B cell (primary cell): ENCODE measurements at regions of chr10 and their contacts with region 1.

Region 1: DNA sequence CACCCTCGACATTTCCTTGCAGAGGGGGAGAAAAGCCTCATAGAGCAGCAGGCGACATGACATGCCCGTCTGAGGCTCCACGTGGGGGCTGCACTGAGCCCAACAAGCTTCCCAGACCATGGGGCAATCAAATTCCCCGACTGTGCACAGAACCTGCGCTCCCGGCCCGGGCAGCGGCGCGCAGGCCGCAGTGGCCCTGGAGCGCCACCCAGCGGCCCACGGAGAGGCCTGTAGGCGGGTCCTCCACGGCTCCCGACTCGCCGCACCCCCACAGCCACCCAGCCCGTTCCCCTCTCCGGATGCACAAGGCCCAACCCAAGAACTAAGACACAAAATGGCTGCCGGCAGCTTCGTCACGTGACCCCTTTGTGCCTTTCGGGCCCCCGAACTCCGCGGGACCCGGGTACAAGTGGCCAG is 816 bp downstream of the EPC1 start:
- DNase-seq: peak; percentile 97
- ATAC-seq: peak; percentile 84
- H3K4me3 ChIP-seq: peak overlapping the region; percentile 82 to 100 (median 98)
- H3K4me3 Mint-ChIP-seq: peak overlapping the region; percentile 97
- H3K27ac ChIP-seq: peak overlapping the region; percentile 99 to 100
- H3K27ac Mint-ChIP-seq: peak overlapping the region; percentile 100
- H3K4me1 ChIP-seq: peaks cover 38 to 51% of the 10 kb centered on the region in 2 donors
- H3K4me1 Mint-ChIP-seq: peaks cover 69% of the 10 kb centered on the region
- H3K27me3 ChIP-seq: no peaks in the 10 kb centered on the region
- H3K27me3 Mint-ChIP-seq: no peaks in the 10 kb centered on the region
- CTCF ChIP-seq: peak; percentile 94

Region 2: GRCh38 chr10:30433730-30434272 is 1912.3 kb before region 1 on chr10 and contains the start of gene MAP3K8:
- CTCF ChIA-PET with region 1: no interaction called
- POLR2A ChIA-PET with region 1: no interaction called
- intact Hi-C with region 1: loop called (anchors 10 kb)
- DNase-seq: peak; percentile 96
- ATAC-seq: peak; percentile 73
- H3K4me3 ChIP-seq: peak within 1 kb of the TSS; percentile 93 to 99 (median 97)
- H3K4me3 Mint-ChIP-seq: peak within 1 kb of the TSS; percentile 98
- H3K27ac ChIP-seq: peak within 1 kb of the TSS; percentile 95 to 99
- H3K27ac Mint-ChIP-seq: peak within 1 kb of the TSS; percentile 97
- H3K4me1 ChIP-seq: peaks cover 56 to 74% of the 10 kb centered on the region in 2 donors
- H3K4me1 Mint-ChIP-seq: peaks cover 71% of the 10 kb centered on the region
- H3K27me3 ChIP-seq: no peaks in the 10 kb centered on the region
- H3K27me3 Mint-ChIP-seq: no peaks in the 10 kb centered on the region
- CTCF ChIP-seq: no peak
- total RNA-seq, gene MAP3K8: 97.0 and 104 TPM in 2 replicates

Region 3: GRCh38 chr10:31578187-31578852 is 767.8 kb before region 1 on chr10:
- CTCF ChIA-PET with region 1: no interaction called
- POLR2A ChIA-PET with region 1: no interaction called
- intact Hi-C with region 1: no loop called
- DNase-seq: no peak
- ATAC-seq: no peak
- H3K4me3 ChIP-seq: no peak overlapping the region
- H3K4me3 Mint-ChIP-seq: no peak overlapping the region
- H3K27ac ChIP-seq: no peak overlapping the region
- H3K27ac Mint-ChIP-seq: no peak overlapping the region
- H3K4me1 ChIP-seq: peaks cover 6% of the 10 kb centered on the region in 2 donors
- H3K4me1 Mint-ChIP-seq: peaks cover 7% of the 10 kb centered on the region
- H3K27me3 ChIP-seq: no peaks in the 10 kb centered on the region
- H3K27me3 Mint-ChIP-seq: peaks cover 5% of the 10 kb centered on the region
- CTCF ChIP-seq: no peak

Region 4: GRCh38 chr10:31799181-31799580 is 547.0 kb before region 1 on chr10:
- CTCF ChIA-PET with region 1: no interaction called
- POLR2A ChIA-PET with region 1: no interaction called
- intact Hi-C with region 1: no loop called
- DNase-seq: no peak
- ATAC-seq: no peak
- H3K4me3 ChIP-seq: no peak overlapping the region
- H3K4me3 Mint-ChIP-seq: no peak overlapping the region
- H3K27ac ChIP-seq: no peak overlapping the region
- H3K27ac Mint-ChIP-seq: no peak overlapping the region
- H3K4me1 ChIP-seq: no peaks in the 10 kb centered on the region
- H3K4me1 Mint-ChIP-seq: no peaks in the 10 kb centered on the region
- H3K27me3 ChIP-seq: no peaks in the 10 kb centered on the region
- H3K27me3 Mint-ChIP-seq: no peaks in the 10 kb centered on the region
- CTCF ChIP-seq: no peak

Region 5: DNA sequence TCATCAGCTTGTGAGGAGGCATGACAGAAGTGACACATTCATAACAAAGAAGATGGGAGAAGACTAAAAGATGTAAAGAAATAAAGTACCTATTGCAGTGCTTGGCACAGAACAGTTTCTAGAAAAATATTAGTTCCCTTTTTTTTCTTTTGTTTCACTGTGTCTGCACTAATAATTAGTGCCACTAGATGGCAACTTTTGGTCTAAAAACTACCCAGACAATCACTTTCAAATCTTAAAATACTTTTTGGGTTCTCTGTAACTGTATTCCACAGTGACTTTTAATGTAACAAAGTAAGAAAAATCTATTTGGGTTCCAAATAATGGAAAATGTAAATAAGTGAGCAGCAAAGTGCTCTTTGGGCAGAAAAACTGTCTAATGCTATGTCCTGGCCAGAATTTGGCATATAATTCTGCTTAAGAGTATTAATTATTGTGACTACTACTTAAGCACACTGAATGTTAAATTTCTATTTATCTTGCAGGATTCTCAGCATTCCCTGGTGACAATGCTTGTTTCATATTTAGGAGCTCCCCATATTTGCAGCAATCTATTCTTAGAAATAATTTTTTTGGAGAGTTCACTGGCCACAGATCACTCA is 155.2 kb before region 1 on chr10:
- CTCF ChIA-PET with region 1: interaction called, 3 read pairs
- POLR2A ChIA-PET with region 1: no interaction called
- intact Hi-C with region 1: loop called (anchors 1 kb)
- DNase-seq: peak; percentile 70
- ATAC-seq: peak; percentile 82
- H3K4me3 ChIP-seq: no peak overlapping the region
- H3K4me3 Mint-ChIP-seq: no peak overlapping the region
- H3K27ac ChIP-seq: no peak overlapping the region
- H3K27ac Mint-ChIP-seq: peak overlapping the region; percentile 79
- H3K4me1 ChIP-seq: peaks cover 0 to 4% of the 10 kb centered on the region in 2 donors
- H3K4me1 Mint-ChIP-seq: peaks cover 5% of the 10 kb centered on the region
- H3K27me3 ChIP-seq: peaks cover 0 to 4% (median 0%) of the 10 kb centered on the region in 4 experiments
- H3K27me3 Mint-ChIP-seq: peaks cover 7% of the 10 kb centered on the region
- CTCF ChIP-seq: peak; percentile 86

Region 6: DNA sequence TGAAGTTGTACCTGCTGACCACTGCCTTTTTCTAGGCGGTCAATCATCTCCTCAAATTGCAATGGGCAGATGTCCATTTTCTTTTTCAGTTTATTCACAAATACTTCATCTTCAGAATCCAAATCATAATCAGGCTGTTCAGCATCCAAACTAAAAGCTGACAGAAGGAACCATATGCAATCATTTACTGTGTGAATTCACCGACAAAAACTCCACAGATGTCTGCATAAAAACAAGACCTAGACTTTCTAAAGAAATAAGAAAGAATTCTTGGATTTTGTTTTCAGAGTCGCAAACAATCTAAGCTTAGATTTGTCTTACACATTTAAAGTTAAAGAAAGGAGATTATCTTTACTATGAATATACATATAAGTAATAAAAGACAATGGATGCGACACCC is 52.6 kb before region 1 on chr10:
- CTCF ChIA-PET with region 1: interaction called, 6 read pairs
- POLR2A ChIA-PET with region 1: no interaction called
- intact Hi-C with region 1: loop called (anchors 5 kb)
- DNase-seq: no peak
- ATAC-seq: no peak
- H3K4me3 ChIP-seq: no peak overlapping the region
- H3K4me3 Mint-ChIP-seq: no peak overlapping the region
- H3K27ac ChIP-seq: no peak overlapping the region
- H3K27ac Mint-ChIP-seq: no peak overlapping the region
- H3K4me1 ChIP-seq: no peaks in the 10 kb centered on the region
- H3K4me1 Mint-ChIP-seq: peaks cover 8% of the 10 kb centered on the region
- H3K27me3 ChIP-seq: no peaks in the 10 kb centered on the region
- H3K27me3 Mint-ChIP-seq: no peaks in the 10 kb centered on the region
- CTCF ChIP-seq: no peak

Region 7: GRCh38 chr10:32332299-32332750 is 13.8 kb before region 1 on chr10:
- CTCF ChIA-PET with region 1: interaction called, 13 read pairs
- POLR2A ChIA-PET with region 1: interaction called, 3 read pairs
- intact Hi-C with region 1: loop called (anchors 2 kb)
- DNase-seq: peak; percentile 78
- ATAC-seq: peak; percentile 96
- H3K4me3 ChIP-seq: no peak overlapping the region
- H3K4me3 Mint-ChIP-seq: peak overlapping the region; percentile 38
- H3K27ac ChIP-seq: peak overlapping the region; percentile 45 to 73
- H3K27ac Mint-ChIP-seq: peak overlapping the region; percentile 70
- H3K4me1 ChIP-seq: peaks cover 71 to 88% of the 10 kb centered on the region in 2 donors
- H3K4me1 Mint-ChIP-seq: peaks cover 90% of the 10 kb centered on the region
- H3K27me3 ChIP-seq: no peaks in the 10 kb centered on the region
- H3K27me3 Mint-ChIP-seq: no peaks in the 10 kb centered on the region
- CTCF ChIP-seq: no peak

Region 8: GRCh38 chr10:32445740-32446535 is 99.8 kb after region 1 on chr10 and contains the start of gene CCDC7:
- CTCF ChIA-PET with region 1: interaction called, 5 read pairs
- POLR2A ChIA-PET with region 1: no interaction called
- intact Hi-C with region 1: loop called (anchors 1 kb)
- DNase-seq: peak; percentile 93
- ATAC-seq: peak; percentile 99
- H3K4me3 ChIP-seq: peak within 1 kb of the TSS; percentile 93 to 99 (median 98)
- H3K4me3 Mint-ChIP-seq: peak within 1 kb of the TSS; percentile 98
- H3K27ac ChIP-seq: peak within 1 kb of the TSS; percentile 95 to 99
- H3K27ac Mint-ChIP-seq: peak within 1 kb of the TSS; percentile 100
- H3K4me1 ChIP-seq: peaks cover 7 to 8% of the 10 kb centered on the region in 2 donors
- H3K4me1 Mint-ChIP-seq: peaks cover 13% of the 10 kb centered on the region
- H3K27me3 ChIP-seq: peaks cover 0 to 4% (median 0%) of the 10 kb centered on the region in 4 experiments
- H3K27me3 Mint-ChIP-seq: peaks cover 16% of the 10 kb centered on the region
- CTCF ChIP-seq: peak; percentile 65
- total RNA-seq, gene CCDC7: 23.5 and 26.6 TPM in 2 replicates